ENCODE measurements at regions of chr11 and their contacts with region 1.

Region 1: GRCh38 chr11:125404776-125405435 is 91.2 kb downstream of the FEZ1 start:
- DNase-seq: peak; percentile 73 to 77
- ATAC-seq: peak; percentile 89 to 94 (median 91)
- H3K4me3 ChIP-seq: peak overlapping the region in 2 of 10 donors; percentile 2 to 29
- H3K27ac ChIP-seq: no peak overlapping the region
- H3K4me1 ChIP-seq: peaks cover 0 to 31% (median 10%) of the 10 kb centered on the region in 9 donors
- H3K27me3 ChIP-seq: peaks cover 0 to 8% (median 0%) of the 10 kb centered on the region in 7 donors
- CTCF ChIP-seq: peak; percentile 88 to 98 (median 95)

Region 2: GRCh38 chr11:125082611-125083311 is 322.1 kb before region 1 on chr11:
- intact Hi-C with region 1: loop called in 2 of 10 experiments (anchors 10 kb)
- DNase-seq: no peak
- ATAC-seq: no peak
- H3K4me3 ChIP-seq: no peak overlapping the region
- H3K27ac ChIP-seq: no peak overlapping the region
- H3K4me1 ChIP-seq: no peaks in the 10 kb centered on the region
- H3K27me3 ChIP-seq: peaks cover 0 to 32% (median 6%) of the 10 kb centered on the region in 7 donors
- CTCF ChIP-seq: no peak

Region 3: DNA sequence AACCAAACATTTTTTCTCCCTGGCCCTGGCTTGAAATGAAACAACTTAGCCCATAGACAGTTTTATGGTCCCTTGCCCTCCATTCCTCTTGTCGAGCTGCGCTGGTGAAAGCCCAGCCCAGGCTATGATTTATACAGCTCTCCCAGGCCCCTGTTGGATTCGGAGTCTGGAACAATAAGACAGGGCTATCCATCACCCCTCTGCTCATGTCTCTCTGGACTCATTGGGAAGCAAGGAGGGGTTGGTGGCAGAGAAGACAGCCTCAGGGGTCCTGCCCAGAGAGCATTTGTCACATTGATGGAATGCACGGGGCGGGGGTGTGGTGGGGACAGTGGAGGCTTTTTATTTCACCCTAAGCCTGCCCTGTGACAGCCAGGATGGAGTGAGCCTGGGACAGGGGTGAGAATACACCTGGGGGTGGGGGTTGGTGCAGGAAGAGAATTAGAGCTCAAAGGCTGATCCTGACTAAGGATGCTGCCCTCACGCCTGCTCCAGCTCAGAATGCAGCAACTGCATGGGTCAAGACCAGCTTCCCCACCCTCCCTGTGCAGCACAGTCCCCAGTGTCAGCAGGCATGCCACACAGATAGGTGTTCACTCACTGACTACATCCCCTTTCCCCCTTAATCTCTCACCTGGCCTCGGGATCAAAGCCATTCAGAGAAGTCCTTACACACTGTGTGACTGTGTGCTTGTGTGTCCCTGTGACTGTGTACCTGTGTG is 250.4 kb before region 1 on chr11:
- intact Hi-C with region 1: loop called in 1 of 10 experiments (anchors 10 kb)
- DNase-seq: no peak
- ATAC-seq: no peak
- H3K4me3 ChIP-seq: no peak overlapping the region
- H3K27ac ChIP-seq: no peak overlapping the region
- H3K4me1 ChIP-seq: no peaks in the 10 kb centered on the region
- H3K27me3 ChIP-seq: peaks cover 0 to 14% (median 5%) of the 10 kb centered on the region in 7 donors
- CTCF ChIP-seq: no peak

Region 4: GRCh38 chr11:125345421-125346178 is 59.3 kb before region 1 on chr11:
- intact Hi-C with region 1: loop called in 6 of 10 experiments (anchors 5 kb)
- DNase-seq: peak; percentile 81 to 85
- ATAC-seq: peak; percentile 76 to 88 (median 82)
- H3K4me3 ChIP-seq: no peak overlapping the region
- H3K27ac ChIP-seq: peak overlapping the region in 9 of 10 donors; percentile 31 to 81 (median 64)
- H3K4me1 ChIP-seq: peaks cover 3 to 43% (median 23%) of the 10 kb centered on the region in 9 donors
- H3K27me3 ChIP-seq: no peaks in the 10 kb centered on the region
- CTCF ChIP-seq: peak; percentile 75 to 93 (median 88)

Region 5: GRCh38 chr11:125423247-125423849 is 18.4 kb after region 1 on chr11:
- intact Hi-C with region 1: no loop called
- DNase-seq: no peak
- ATAC-seq: no peak
- H3K4me3 ChIP-seq: no peak overlapping the region
- H3K27ac ChIP-seq: no peak overlapping the region
- H3K4me1 ChIP-seq: peaks cover 0 to 27% (median 14%) of the 10 kb centered on the region in 9 donors
- H3K27me3 ChIP-seq: no peaks in the 10 kb centered on the region
- CTCF ChIP-seq: peak in 6 of 9 donors; percentile 12 to 32 (median 21)

Region 6: DNA sequence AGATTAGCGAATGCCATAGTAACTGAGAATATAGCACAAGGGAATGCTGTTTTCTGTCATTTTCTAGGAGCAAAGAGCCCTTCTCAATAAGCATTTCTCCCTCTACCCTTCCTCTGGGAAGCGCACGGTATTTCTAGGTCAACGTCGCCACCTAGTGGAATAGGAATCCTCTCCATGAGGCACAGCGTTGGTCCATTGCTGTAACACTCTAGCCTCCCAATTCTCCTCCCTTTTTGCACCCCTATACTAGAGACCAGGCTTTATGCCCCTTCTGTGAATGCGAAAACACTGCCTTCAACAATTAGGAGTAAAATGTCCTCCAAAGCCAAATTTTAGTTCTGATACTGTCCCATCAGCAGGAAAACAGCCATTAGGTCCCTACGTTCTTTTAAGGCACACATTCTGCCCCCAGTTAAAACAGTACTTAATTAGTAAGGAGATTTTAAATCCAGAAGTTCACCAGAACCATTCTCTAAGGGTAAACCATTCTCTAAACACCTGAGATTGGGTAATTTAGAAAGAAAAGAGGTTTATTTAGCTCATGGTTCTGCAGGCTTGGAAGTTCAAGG is 469.7 kb after region 1 on chr11:
- intact Hi-C with region 1: no loop called
- DNase-seq: peak in 1 of 2 donors; percentile 67
- ATAC-seq: peak; percentile 67 to 95 (median 92)
- H3K4me3 ChIP-seq: peak overlapping the region in 6 of 10 donors; percentile 12 to 42 (median 22)
- H3K27ac ChIP-seq: no peak overlapping the region
- H3K4me1 ChIP-seq: peaks cover 0 to 4% (median 0%) of the 10 kb centered on the region in 9 donors
- H3K27me3 ChIP-seq: no peaks in the 10 kb centered on the region
- CTCF ChIP-seq: peak; percentile 51 to 85 (median 75)